Caco-2 (cell line): ENCODE measurements at regions of chr6 and their contacts with region 1.

Region 1: GRCh38 chr6:116680975-116681808 is at the start of gene KPNA5:
- DNase-seq: peak; percentile 90 to 93
- H3K4me3 ChIP-seq: peak within 1 kb of the TSS; percentile 69
- H3K4me3 Mint-ChIP-seq: peak within 1 kb of the TSS; percentile 83
- H3K27ac Mint-ChIP-seq: peak within 1 kb of the TSS; percentile 89
- H3K4me1 ChIP-seq: peaks cover 4% of the 10 kb centered on the region
- H3K4me1 Mint-ChIP-seq: peaks cover 7% of the 10 kb centered on the region
- H3K27me3 ChIP-seq: no peaks in the 10 kb centered on the region
- H3K27me3 Mint-ChIP-seq: no peaks in the 10 kb centered on the region
- CTCF ChIP-seq: no peak
- total RNA-seq, gene KPNA5: 12.0 and 12.2 TPM in 2 replicates

Region 2: DNA sequence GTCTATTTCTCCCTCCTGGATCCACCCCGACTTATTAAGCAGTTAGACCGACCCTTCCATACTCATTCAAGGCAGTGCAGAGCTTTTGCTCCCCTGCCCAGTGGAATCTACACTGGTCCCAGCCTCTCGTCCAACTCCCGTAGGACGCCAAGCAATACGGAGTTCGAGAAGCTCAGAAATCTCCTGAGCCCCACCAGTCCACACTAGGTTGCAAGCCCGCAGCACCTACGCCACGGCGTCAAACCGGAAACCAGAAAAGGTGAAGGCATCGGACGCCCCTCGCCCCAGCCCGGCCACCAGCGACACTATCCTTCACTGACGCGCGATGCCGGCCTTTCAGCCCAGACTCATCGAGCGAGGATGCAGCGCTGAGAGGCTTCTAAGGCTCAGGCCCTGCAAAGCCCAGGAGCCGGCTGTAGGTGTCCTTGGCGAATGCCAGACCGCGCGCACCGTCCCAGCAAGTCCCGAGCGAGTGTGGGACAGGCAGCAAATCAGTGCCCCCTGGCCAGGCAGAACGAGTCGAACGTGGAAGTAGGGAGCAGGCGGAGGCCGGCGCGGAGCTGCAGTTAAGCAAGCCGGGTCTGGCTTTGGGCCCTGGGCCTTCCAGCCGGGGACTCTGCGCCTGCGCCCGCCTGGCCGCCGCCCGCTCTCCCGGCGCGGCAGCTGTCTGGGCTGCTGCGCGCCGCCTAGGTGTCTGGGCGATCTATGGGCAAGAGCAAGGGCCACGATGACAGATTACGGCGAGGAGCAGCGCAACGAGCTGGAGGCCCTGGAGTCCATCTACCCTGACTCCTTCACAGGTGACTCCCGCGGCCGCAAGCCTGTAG is 110.1 kb before region 1 on chr6 and contains the start of gene RWDD1:
- CTCF ChIA-PET with region 1: no interaction called
- POLR2A ChIA-PET with region 1: no interaction called
- intact Hi-C with region 1: loop called (anchors 1 kb)
- DNase-seq: peak; percentile 99
- H3K4me3 ChIP-seq: peak within 1 kb of the TSS; percentile 96
- H3K4me3 Mint-ChIP-seq: peak within 1 kb of the TSS; percentile 98
- H3K27ac Mint-ChIP-seq: peak within 1 kb of the TSS; percentile 99
- H3K4me1 ChIP-seq: peaks cover 6% of the 10 kb centered on the region; the same call in 1 of the 2 replicates
- H3K4me1 Mint-ChIP-seq: peaks cover 7% of the 10 kb centered on the region
- H3K27me3 ChIP-seq: no peaks in the 10 kb centered on the region
- H3K27me3 Mint-ChIP-seq: no peaks in the 10 kb centered on the region
- CTCF ChIP-seq: no peak
- total RNA-seq, gene RWDD1: 35.0 and 37.9 TPM in 2 replicates

Region 3: GRCh38 chr6:116615937-116616736 is 65.1 kb before region 1 on chr6 and contains the start of gene RSPH4A:
- CTCF ChIA-PET with region 1: no interaction called
- POLR2A ChIA-PET with region 1: no interaction called
- intact Hi-C with region 1: no loop called
- DNase-seq: peak; percentile 88 to 89
- H3K4me3 ChIP-seq: peak within 1 kb of the TSS; percentile 49
- H3K4me3 Mint-ChIP-seq: peak within 1 kb of the TSS; percentile 77
- H3K27ac Mint-ChIP-seq: peak within 1 kb of the TSS; percentile 70
- H3K4me1 ChIP-seq: peaks cover 4% of the 10 kb centered on the region; the same call in 1 of the 2 replicates
- H3K4me1 Mint-ChIP-seq: peaks cover 7% of the 10 kb centered on the region
- H3K27me3 ChIP-seq: no peaks in the 10 kb centered on the region
- H3K27me3 Mint-ChIP-seq: peaks cover 4% of the 10 kb centered on the region
- CTCF ChIP-seq: no peak
- total RNA-seq, gene RSPH4A: 0.20 and 0.23 TPM in 2 replicates

Region 4: DNA sequence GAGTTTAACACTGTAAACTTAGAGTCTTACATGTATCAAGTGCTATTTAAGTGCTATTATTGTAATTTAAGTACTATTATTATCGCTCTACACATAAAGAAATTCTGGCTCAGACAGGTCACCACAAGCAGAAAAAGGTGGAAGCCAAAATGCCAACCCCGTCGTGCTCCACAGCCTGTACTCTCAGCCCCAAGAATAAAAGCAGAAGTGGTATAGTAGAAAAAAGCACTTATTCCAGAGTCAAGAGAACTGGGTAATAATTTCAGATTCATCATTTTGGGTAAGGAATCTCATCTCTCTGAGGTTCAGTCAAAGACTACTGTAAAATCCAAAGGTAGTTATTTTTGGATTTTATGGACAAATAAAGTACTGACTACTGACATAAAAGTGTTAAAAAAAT is 13.6 kb before region 1 on chr6:
- CTCF ChIA-PET with region 1: no interaction called
- POLR2A ChIA-PET with region 1: interaction called, 9 read pairs
- intact Hi-C with region 1: loop called (anchors 1 kb)
- DNase-seq: no peak
- H3K4me3 ChIP-seq: peak overlapping the region; percentile 50
- H3K4me3 Mint-ChIP-seq: peak overlapping the region; percentile 99
- H3K27ac Mint-ChIP-seq: peak overlapping the region; percentile 95
- H3K4me1 ChIP-seq: peaks cover 8% of the 10 kb centered on the region
- H3K4me1 Mint-ChIP-seq: no peaks in the 10 kb centered on the region
- H3K27me3 ChIP-seq: no peaks in the 10 kb centered on the region
- H3K27me3 Mint-ChIP-seq: peaks cover 2% of the 10 kb centered on the region
- CTCF ChIP-seq: no peak

Region 5: GRCh38 chr6:116866281-116866871 is 185.2 kb after region 1 on chr6:
- CTCF ChIA-PET with region 1: no interaction called
- POLR2A ChIA-PET with region 1: no interaction called
- intact Hi-C with region 1: no loop called
- DNase-seq: no peak
- H3K4me3 ChIP-seq: no peak overlapping the region
- H3K4me3 Mint-ChIP-seq: no peak overlapping the region
- H3K27ac Mint-ChIP-seq: no peak overlapping the region
- H3K4me1 ChIP-seq: no peaks in the 10 kb centered on the region
- H3K4me1 Mint-ChIP-seq: no peaks in the 10 kb centered on the region
- H3K27me3 ChIP-seq: no peaks in the 10 kb centered on the region
- H3K27me3 Mint-ChIP-seq: no peaks in the 10 kb centered on the region
- CTCF ChIP-seq: no peak